ENCODE measurements at regions of chr13 and their contacts with region 1.

Region 1: DNA sequence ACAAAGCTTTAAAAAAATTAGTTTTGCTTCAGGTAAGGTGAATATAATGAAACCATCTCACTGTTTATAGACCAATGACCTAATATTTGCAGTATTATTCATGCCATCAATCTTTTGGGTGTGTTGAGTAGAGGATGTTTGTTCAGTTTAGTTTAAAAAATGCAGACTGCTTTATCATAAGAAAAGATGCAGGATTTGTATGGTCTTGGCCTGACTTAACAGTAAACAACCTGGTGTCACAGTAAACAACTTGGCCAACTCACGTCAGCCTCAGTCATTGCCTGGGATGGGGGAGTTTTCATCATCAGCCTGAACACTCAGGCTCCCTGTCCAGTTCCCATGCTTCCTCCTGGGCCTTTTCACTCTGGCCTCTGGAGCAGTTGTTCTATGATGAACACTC is 55.1 kb downstream of the LMO7 start:
- DNase-seq: no peak
- H3K4me3 ChIP-seq: no peak overlapping the region
- H3K27ac ChIP-seq: no peak overlapping the region
- H3K4me1 ChIP-seq: peaks cover 0 to 5% (median 4%) of the 10 kb centered on the region in 6 donors
- H3K27me3 ChIP-seq: no peaks in the 10 kb centered on the region
- CTCF ChIP-seq: no peak
- POLR2A ChIP-seq: no peak

Region 2: DNA sequence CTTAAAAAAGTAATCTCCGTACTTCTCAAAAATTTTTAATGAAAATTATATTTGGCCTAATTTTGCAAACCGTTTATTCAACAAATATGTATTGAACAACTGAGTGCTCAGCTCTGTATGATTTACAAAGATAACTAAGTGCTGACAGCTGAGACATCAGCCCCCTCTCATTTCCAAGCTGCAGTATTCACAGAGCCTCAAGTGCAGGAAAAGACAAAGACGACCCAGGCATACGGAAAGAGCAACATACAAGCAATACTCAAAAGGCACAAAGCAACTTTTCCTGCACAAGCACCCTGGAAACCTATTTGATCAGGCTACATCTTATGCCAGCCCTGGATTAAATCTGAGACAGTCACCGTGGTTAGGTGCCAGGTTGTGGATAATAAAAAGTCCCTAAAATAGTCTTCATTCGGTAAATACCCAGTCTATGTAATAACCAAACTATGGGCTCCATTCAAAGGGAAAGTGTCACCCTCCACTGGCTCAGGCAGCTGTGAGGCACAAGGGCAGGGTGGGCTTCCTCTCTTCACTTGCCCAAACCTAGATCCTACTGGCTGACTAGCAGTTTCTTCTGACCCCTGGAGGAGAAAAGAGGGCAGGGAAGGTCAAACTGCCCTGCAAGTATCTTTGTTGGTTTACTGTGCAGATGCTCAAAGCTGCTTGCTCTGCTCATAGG is 274.7 kb before region 1 on chr13:
- intact Hi-C with region 1: no loop called
- DNase-seq: no peak
- H3K4me3 ChIP-seq: no peak overlapping the region
- H3K27ac ChIP-seq: peak overlapping the region in 1 of 8 donors; percentile 23
- H3K4me1 ChIP-seq: peaks cover 0 to 24% (median 9%) of the 10 kb centered on the region in 6 donors
- H3K27me3 ChIP-seq: no peaks in the 10 kb centered on the region
- CTCF ChIP-seq: no peak
- POLR2A ChIP-seq: no peak

Region 3: GRCh38 chr13:75910591-75910990 is 219.4 kb after region 1 on chr13:
- intact Hi-C with region 1: no loop called
- DNase-seq: no peak
- H3K4me3 ChIP-seq: no peak overlapping the region
- H3K27ac ChIP-seq: no peak overlapping the region
- H3K4me1 ChIP-seq: no peaks in the 10 kb centered on the region
- H3K27me3 ChIP-seq: peaks cover 0 to 4% (median 0%) of the 10 kb centered on the region in 7 donors
- CTCF ChIP-seq: no peak
- POLR2A ChIP-seq: no peak

Region 4: GRCh38 chr13:76473552-76474134 is 782.5 kb after region 1 on chr13:
- intact Hi-C with region 1: loop called (anchors 5 kb)
- DNase-seq: no peak
- H3K4me3 ChIP-seq: no peak overlapping the region
- H3K27ac ChIP-seq: no peak overlapping the region
- H3K4me1 ChIP-seq: no peaks in the 10 kb centered on the region
- H3K27me3 ChIP-seq: no peaks in the 10 kb centered on the region
- CTCF ChIP-seq: peak; percentile 54 to 84 (median 75)
- POLR2A ChIP-seq: no peak